ENCODE measurements at regions of chr11 and their contacts with region 1.

Region 1: DNA sequence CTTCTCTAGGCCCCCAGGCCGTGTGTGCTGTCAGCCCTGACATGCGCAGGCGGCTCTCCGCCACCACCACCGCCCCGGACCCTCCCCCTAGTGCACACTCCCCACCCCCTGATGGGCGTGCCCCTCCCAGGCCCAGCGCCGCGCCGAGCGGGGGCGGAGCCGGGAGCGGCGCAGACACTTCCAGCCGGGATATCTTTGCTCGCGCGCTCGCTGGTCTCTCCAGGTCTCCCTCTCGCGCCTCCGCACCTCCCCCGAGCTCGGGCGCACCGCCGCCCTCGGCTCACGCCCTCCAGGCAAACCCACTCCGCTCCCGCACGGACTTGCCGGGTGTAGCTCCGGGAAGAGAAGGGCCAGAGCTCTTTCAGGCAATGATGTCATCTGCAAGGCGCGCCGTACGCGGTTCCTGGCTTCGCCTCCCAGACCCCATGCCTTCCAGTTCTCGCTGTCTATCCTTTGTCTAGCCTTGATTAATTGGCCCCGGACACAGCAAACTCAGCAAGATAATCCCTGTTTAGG is at the start of gene SCN3B:
- DNase-seq: peak; percentile 84
- H3K4me3 ChIP-seq: peak within 1 kb of the TSS; percentile 58 to 67 (median 59)
- H3K27ac ChIP-seq: no peak within 1 kb of the TSS
- H3K4me1 ChIP-seq: peaks cover 6% of the 10 kb centered on the region
- H3K27me3 ChIP-seq: peaks cover 12 to 16% of the 10 kb centered on the region in 2 experiments
- CTCF ChIP-seq: no peak
- POLR2A ChIP-seq: no peak
- total RNA-seq, gene SCN3B: 1.4 and 1.5 TPM in 2 replicates

Region 2: DNA sequence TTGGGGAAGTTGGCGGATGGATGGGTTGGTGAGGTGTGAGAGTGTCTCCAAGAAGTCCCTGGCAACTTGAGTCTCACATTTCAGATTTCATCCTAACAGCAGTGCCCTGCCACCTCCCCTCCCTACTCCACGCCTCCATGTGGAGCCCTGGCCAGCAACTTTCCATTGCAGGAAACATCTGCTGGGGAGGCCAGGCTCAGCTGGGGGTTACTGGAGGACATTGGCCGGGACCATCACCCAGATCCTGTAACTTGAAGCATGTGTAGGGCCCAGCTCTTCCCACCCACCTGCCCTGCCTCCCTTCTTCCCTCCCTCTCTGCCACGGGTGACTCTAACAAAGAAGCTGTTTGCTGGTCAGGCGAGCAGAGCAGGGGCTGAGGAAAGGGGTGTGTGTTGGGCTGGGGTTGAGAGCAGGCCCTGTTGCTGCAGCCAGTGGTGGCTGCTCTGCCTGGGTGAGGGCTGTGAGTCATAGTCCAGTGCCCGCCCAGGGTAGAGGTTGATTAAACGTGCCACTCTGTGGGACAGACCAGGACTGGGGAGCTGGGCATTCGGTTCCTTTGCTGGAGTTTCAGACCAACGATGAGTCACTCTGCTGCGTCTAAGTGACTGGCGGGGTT is 64.2 kb before region 1 on chr11:
- CTCF ChIA-PET with region 1: no interaction called
- POLR2A ChIA-PET with region 1: no interaction called
- dilution Hi-C with region 1: no loop called
- intact Hi-C with region 1: loop called (anchors 1 kb)
- DNase-seq: peak; percentile 95
- H3K4me3 ChIP-seq: no peak overlapping the region
- H3K27ac ChIP-seq: no peak overlapping the region
- H3K4me1 ChIP-seq: peaks cover 18% of the 10 kb centered on the region
- H3K27me3 ChIP-seq: no peaks in the 10 kb centered on the region
- CTCF ChIP-seq: no peak
- POLR2A ChIP-seq: no peak

Region 3: DNA sequence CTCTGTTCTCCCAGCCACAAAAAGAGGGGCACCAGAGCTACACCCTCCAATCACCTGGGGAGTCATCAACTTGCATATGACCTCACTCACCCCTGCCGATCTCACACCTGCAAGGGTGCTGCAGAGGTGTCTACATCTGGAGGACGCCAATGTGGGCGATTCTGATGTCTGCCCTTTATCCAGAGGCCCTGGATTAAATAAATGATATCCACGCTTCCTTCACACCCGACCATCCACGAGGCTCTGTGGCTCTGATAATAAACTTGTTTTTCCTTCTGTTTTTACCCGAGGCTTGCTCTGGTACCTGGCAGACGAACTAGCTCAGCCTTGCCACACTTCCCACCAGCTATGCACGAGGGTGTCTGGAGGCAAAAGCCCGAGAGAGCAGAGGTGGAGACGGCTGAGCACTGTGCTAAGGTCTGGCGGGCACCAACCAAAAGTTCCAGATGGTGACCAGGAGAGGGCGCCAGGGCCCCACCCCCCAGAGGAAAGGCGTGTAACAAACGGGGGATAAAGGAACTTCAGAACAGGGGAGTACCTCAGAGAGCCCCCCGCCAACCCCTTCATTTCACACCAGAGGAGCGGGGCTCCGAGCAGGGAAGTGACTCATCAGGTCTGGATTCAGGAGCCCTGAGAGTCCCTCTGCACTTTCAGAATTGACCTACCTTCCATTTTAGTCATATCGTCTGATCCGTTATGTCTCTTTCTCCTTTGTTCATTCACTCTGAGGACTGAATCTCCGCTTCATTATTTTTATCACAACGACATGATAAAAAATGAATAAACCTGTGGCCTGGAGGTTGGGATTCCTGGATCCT is 13.7 kb before region 1 on chr11:
- CTCF ChIA-PET with region 1: interaction called, 23 read pairs
- POLR2A ChIA-PET with region 1: no interaction called
- dilution Hi-C with region 1: no loop called
- intact Hi-C with region 1: no loop called
- DNase-seq: peak; percentile 49
- H3K4me3 ChIP-seq: no peak overlapping the region
- H3K27ac ChIP-seq: no peak overlapping the region
- H3K4me1 ChIP-seq: no peaks in the 10 kb centered on the region
- H3K27me3 ChIP-seq: no peaks in the 10 kb centered on the region
- CTCF ChIP-seq: peak; percentile 70 to 89
- POLR2A ChIP-seq: no peak

Region 4: DNA sequence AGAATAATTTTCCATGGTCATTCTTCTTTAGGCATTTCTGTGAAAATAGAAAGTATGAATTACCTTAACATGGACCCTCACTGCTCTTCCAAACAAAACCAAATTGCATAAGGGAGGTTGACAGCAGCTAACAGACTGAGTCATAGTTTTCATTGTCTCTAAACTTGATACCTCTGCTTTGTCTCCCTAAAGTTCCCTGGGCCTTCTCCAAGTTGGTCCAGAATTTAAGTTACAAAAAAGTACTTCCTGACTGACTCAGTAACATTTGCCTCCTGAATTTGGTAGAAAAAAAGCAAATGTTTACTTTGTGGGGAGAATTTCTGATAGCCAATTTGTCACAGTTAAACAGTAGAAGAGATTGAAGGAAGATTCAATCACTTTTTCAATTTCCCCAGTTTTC is 656.1 kb after region 1 on chr11:
- CTCF ChIA-PET with region 1: no interaction called
- POLR2A ChIA-PET with region 1: no interaction called
- dilution Hi-C with region 1: no loop called
- intact Hi-C with region 1: no loop called
- DNase-seq: peak; percentile 16
- H3K4me3 ChIP-seq: no peak overlapping the region
- H3K27ac ChIP-seq: no peak overlapping the region
- H3K4me1 ChIP-seq: peaks cover 6% of the 10 kb centered on the region
- H3K27me3 ChIP-seq: peaks cover 0 to 9% of the 10 kb centered on the region in 2 experiments
- CTCF ChIP-seq: no peak
- POLR2A ChIP-seq: no peak